ENCODE measurements at regions of chr14 and their contacts with region 1.

Region 1: DNA sequence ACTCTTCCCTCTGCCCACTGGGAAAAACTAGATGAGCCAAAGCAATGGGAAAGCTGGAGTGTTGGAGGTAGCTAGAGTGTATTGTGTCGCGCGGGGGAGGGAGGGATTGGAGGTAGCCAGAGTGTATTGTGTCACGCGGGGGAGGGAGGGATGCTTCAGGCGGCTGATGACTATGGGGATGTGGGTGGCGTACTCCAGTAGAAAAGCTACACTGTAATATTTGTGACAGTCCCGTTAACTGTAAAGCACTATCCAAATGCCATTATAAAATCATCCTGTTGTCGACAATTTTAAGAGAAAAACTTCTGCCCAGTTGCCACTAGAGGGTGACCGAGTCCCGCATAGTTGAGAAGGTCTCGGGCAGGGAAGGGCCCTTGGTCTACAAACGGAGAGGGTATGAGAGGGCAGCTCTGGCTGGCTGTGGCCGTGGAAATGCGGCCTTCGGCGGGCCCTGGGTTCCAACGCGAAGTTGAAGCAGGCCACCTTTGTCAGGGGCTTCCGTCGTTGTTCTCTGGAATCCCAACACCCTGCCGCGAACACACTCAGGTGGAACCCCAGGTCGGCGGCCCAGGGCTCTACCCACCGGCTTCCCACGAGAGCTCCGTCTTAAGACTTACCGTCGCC is 15.1 kb upstream of the PLEK2 start:
- DNase-seq: peak; percentile 85
- H3K4me3 ChIP-seq: peak overlapping the region in 1 of 2 experiments; percentile 44; a peak in 1 of 4 replicates
- H3K27ac ChIP-seq: no peak overlapping the region
- H3K4me1 ChIP-seq: no peaks in the 10 kb centered on the region
- H3K27me3 ChIP-seq: no peaks in the 10 kb centered on the region; the same call in 1 of the 2 replicates
- CTCF ChIP-seq: peak; percentile 83
- EP300 ChIP-seq: no peak
- RAD21 ChIP-seq: peak; percentile 95

Region 2: DNA sequence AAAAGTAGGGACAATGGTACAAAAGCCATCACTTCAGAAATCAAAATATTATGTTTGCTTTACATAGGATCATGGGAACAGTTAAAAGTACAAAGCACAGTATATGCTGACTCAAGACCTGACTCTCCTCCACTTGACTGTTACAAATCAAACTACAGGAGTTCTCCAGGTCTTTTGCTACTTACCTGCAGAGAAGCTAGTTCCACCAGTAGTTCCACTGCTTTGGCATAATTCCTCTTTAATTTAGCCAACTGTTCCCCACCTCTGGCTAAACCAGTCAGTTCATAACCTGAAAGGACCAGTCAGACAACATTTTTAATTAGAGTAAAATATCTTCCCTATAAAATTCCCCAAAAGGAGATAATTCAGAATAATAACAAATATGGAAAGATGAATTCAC is 81.5 kb before region 1 on chr14:
- CTCF ChIA-PET with region 1: no interaction called
- POLR2A ChIA-PET with region 1: no interaction called
- DNase-seq: no peak
- H3K4me3 ChIP-seq: no peak overlapping the region
- H3K27ac ChIP-seq: no peak overlapping the region
- H3K4me1 ChIP-seq: no peaks in the 10 kb centered on the region
- H3K27me3 ChIP-seq: no peaks in the 10 kb centered on the region
- CTCF ChIP-seq: no peak
- EP300 ChIP-seq: no peak
- RAD21 ChIP-seq: no peak

Region 3: DNA sequence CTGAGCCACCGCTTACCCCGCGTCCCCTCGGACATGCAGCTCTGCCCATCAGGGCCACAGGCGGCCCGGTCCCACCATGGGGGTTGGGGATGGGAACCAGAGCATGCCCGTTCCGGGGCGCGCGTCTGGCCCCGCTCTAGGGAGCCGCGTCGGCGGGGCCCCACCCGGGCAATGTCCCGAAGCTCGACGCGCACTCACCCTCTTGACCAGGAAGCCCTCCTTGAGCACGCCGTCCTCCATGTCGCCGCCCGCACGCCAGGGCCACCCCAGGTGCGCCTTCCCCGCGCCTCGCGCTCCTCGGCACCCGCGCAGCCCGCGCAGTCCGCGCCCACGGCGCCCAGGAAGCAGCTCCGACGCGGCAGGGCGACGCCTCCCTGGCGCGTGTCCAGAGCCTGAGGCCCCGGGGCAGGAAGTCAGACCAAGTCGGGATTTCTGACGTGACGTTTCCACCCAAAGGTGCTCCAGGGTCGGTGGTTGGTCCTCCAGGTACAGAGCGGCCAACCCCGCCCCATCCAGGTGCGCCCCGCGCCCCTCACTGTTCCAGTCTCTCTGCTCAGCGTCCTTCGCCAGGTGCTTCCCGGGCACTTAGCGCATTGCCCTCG is 15.2 kb before region 1 on chr14 and contains the start of gene PLEK2:
- CTCF ChIA-PET with region 1: interaction called, 28 read pairs
- POLR2A ChIA-PET with region 1: no interaction called
- DNase-seq: peak; percentile 60
- H3K4me3 ChIP-seq: peak within 1 kb of the TSS in 1 of 2 experiments; percentile 38; a peak in 3 of 4 replicates
- H3K27ac ChIP-seq: no peak within 1 kb of the TSS
- H3K4me1 ChIP-seq: peaks cover 7 to 10% of the 10 kb centered on the region in 2 experiments; a peak in 1 of 4 replicates
- H3K27me3 ChIP-seq: no peaks in the 10 kb centered on the region
- CTCF ChIP-seq: no peak
- EP300 ChIP-seq: no peak
- RAD21 ChIP-seq: no peak
- polyA plus RNA-seq, gene PLEK2: 0.11 and 0.56 TPM in 2 replicates

Region 4: DNA sequence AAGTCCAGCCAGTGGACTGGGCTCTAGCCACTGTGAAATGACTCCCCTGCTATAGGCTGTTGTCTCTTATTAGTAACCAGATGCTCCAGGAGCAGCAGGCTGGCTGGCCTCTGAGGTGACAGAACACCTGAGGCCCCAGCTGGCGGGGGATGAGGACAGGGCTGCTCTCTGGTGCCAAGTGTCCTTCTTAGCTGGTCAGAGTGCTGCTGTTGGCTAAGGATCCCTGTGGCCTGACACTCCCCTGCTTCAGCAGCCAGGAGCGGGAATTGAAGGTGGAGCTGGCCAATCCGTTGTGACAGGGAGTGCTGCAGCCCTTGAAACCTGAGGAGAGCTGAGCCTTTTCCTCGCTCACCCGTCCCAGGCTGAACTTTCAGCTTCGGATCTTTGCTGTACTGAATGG is 30.7 kb after region 1 on chr14:
- CTCF ChIA-PET with region 1: interaction called, 10 read pairs
- POLR2A ChIA-PET with region 1: no interaction called
- DNase-seq: no peak
- H3K4me3 ChIP-seq: no peak overlapping the region
- H3K27ac ChIP-seq: no peak overlapping the region
- H3K4me1 ChIP-seq: no peaks in the 10 kb centered on the region
- H3K27me3 ChIP-seq: peaks cover 5% of the 10 kb centered on the region; the same call in 1 of the 2 replicates
- CTCF ChIP-seq: no peak
- EP300 ChIP-seq: no peak
- RAD21 ChIP-seq: no peak

Region 5: DNA sequence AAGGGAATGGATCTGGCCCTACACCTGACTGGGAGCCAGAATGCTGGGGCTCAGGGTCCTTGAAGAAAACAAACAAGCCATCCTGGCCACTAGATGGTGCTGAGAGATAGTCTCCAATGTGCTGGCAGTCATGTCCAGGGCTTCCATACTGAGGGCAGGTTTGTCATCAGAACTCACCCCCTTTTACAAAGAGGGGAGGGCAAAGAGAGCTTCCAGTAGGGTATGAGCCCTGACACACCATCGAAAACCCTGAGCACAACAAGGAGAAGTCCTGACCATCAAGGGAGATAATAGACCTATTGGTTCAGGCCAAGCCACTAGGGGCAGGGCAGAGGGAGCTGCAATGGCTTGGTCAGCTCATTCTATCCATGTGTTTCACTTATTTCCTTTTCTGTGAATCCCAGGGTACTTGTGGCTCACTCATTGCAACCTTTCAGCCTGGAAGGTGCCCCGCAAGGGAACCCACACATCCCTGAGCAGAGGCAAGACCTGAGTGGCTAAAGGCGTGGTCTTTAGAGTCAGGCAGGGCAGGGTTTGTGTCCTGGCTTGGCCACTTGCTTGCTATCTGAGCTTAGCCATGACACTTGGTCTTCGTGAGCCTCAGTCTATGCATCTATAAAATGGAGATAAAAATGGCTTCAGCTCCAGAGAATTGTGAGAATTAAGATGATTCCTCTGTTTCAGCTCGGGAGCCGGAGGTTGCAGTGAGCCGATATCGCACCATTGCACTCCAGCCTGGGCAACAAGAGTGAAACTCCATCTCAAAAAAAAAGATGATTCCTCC is 99.8 kb after region 1 on chr14:
- CTCF ChIA-PET with region 1: interaction called, 55 read pairs
- POLR2A ChIA-PET with region 1: no interaction called
- DNase-seq: peak; percentile 65
- H3K4me3 ChIP-seq: peak overlapping the region in 1 of 2 experiments; percentile 34; a peak in 1 of 4 replicates
- H3K27ac ChIP-seq: no peak overlapping the region
- H3K4me1 ChIP-seq: no peaks in the 10 kb centered on the region; a peak in 1 of 4 replicates
- H3K27me3 ChIP-seq: peaks cover 18% of the 10 kb centered on the region; the same call in 1 of the 2 replicates
- CTCF ChIP-seq: peak; percentile 86
- EP300 ChIP-seq: no peak
- RAD21 ChIP-seq: peak; percentile 72

Region 6: DNA sequence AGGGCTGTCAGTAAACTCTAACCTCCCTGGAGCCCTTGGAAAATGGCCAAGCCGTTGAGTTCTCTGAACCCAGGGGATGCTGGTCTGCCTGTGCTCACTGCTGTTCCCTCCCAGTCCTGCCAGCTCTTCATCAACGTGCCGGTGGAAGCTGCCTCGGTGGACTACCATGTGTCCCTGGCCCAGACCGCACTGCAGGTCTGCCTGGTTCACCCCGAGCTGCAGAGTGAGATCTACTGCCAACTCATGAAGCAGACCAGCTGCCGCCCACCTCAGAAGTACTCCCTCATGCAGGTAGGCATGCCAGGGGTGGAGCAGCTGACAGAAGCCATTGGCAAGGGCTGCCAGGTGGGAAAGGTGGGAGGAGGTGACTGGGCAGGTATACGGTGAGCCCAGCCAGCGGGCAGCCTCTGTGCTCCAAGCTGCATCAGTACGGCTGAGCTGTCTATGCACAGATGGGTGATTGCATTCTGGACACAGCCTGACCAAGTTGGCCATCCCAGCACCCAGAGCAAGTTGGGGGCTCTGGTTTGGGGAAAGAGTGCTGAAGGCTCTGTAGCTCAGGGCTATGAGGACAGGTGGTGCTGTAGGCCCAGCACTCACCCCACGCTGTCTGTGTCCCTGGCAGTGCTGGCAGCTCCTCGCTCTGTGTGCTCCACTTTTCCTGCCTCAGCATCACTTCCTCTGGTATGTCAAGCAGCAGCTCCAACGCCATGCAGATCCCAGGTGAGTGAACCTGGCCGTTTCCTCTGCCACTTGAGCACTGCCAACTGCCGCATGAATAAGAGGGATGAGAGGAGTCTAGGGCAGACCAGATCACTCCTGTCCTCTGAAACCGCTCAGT is 151.0 kb after region 1 on chr14:
- CTCF ChIA-PET with region 1: interaction called, 319 read pairs
- POLR2A ChIA-PET with region 1: no interaction called
- DNase-seq: no peak
- H3K4me3 ChIP-seq: no peak overlapping the region
- H3K27ac ChIP-seq: no peak overlapping the region
- H3K4me1 ChIP-seq: no peaks in the 10 kb centered on the region; a peak in 1 of 4 replicates
- H3K27me3 ChIP-seq: no peaks in the 10 kb centered on the region
- CTCF ChIP-seq: no peak
- EP300 ChIP-seq: no peak
- RAD21 ChIP-seq: no peak

Region 7: DNA sequence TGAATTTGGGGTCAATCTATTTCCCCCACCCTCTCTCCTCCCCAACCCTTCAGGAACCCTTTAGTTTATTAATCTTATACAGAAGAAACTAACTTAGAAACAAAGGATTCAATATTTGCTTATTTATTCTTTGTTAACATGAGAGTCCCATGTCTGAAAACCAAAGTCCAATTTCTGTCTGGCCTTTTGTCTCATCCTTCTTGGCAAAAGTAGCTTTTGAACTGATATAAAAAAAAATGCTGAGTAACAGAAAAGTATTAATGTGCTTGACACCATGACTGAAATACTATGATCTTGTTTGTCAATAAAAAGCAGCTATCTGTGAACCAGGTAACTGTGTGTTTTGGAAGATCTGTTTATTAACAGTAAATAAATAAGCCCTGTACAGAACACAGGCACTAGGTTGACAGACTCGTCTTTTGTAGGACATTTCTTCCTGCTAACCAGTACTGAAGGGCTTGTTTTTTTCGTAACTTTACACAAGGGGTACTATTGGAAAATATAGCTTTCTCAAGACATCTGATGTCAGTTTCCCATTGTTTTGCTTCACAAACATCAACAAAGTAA is 162.2 kb after region 1 on chr14:
- CTCF ChIA-PET with region 1: interaction called, 61 read pairs
- POLR2A ChIA-PET with region 1: no interaction called
- DNase-seq: no peak
- H3K4me3 ChIP-seq: no peak overlapping the region
- H3K27ac ChIP-seq: no peak overlapping the region
- H3K4me1 ChIP-seq: no peaks in the 10 kb centered on the region
- H3K27me3 ChIP-seq: no peaks in the 10 kb centered on the region
- CTCF ChIP-seq: no peak
- EP300 ChIP-seq: no peak
- RAD21 ChIP-seq: no peak

Measured in SK-N-SH (cell line).